ENCODE measurements at regions of chr15 and their contacts with region 1.

Region 1: GRCh38 chr15:79184465-79184892 is 93.9 kb upstream of the RASGRF1 start:
- DNase-seq: peak in 5 of 6 donors; percentile 27 to 84 (median 68)
- ATAC-seq: peak; percentile 46 to 85 (median 80)
- H3K4me3 ChIP-seq: no peak overlapping the region
- H3K27ac ChIP-seq: no peak overlapping the region
- H3K4me1 ChIP-seq: no peaks in the 10 kb centered on the region
- H3K27me3 ChIP-seq: no peaks in the 10 kb centered on the region
- CTCF ChIP-seq: peak; percentile 78 to 96 (median 92)

Region 2: GRCh38 chr15:78909791-78910228 is 274.7 kb before region 1 on chr15:
- intact Hi-C with region 1: loop called in 1 of 3 experiments (anchors 10 kb)
- DNase-seq: no peak
- ATAC-seq: peak in 3 of 4 donors; percentile 53 to 79 (median 54)
- H3K4me3 ChIP-seq: no peak overlapping the region
- H3K27ac ChIP-seq: no peak overlapping the region
- H3K4me1 ChIP-seq: peaks cover 3 to 7% (median 5%) of the 10 kb centered on the region in 3 donors
- H3K27me3 ChIP-seq: no peaks in the 10 kb centered on the region
- CTCF ChIP-seq: peak in 3 of 4 donors; percentile 39 to 66 (median 40)

Region 3: DNA sequence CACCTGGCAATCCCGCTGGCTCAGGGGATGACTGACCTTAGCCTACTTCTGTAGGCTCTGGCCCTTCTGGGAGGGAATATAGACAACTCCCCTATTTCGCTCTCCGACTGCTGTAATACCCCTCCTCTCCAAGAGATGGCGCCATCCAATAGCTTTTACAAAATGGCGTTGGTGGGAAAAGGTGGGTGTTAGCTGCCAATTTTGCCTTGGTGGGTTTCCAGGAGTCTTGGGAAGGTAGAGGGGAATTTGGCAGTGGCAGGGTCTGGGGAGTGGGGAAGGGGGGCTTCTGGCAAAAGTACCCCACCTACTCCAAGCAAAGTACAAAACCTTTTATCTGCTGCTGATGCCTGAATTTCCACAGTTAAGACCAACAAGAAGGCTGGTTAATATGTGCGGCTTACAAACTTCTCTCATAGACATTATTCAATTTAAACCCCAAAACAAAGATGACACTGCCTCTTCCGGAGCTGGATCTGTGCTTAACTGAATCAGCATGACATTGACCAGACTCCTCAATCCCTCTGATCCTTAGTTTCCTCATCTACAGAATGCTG is 156.0 kb before region 1 on chr15:
- intact Hi-C with region 1: loop called (anchors 5 to 10 kb)
- DNase-seq: peak in 1 of 6 donors; percentile 35
- ATAC-seq: peak in 3 of 4 donors; percentile 44 to 63 (median 63)
- H3K4me3 ChIP-seq: no peak overlapping the region
- H3K27ac ChIP-seq: no peak overlapping the region
- H3K4me1 ChIP-seq: no peaks in the 10 kb centered on the region
- H3K27me3 ChIP-seq: no peaks in the 10 kb centered on the region
- CTCF ChIP-seq: peak; percentile 25 to 49 (median 38)

Region 4: DNA sequence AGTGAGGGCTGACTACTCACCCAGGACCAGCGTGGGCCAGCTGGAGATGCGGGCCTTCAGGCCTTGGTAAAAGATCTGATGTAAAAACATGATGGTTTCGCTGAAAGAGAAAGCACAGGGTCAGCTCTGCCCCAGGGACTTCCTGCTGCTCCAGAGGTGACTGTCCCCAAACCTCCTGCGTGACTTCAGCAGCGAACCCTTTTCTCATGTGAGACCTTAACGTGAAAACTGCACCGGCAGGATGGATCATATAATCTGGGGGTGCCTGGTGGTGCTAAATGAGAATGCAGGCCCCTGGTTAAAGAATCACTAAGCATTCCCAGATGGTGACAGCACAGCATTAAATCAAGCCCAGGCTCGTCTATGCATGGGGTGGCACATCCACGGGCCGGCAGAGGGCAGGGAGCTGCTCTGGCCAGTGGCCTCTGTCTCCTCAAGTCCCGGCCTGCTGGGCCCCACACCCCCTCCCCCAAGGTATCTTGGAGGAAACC is 149.3 kb before region 1 on chr15:
- intact Hi-C with region 1: loop called in 1 of 3 experiments (anchors 10 kb)
- DNase-seq: no peak
- ATAC-seq: no peak
- H3K4me3 ChIP-seq: no peak overlapping the region
- H3K27ac ChIP-seq: no peak overlapping the region
- H3K4me1 ChIP-seq: no peaks in the 10 kb centered on the region
- H3K27me3 ChIP-seq: no peaks in the 10 kb centered on the region
- CTCF ChIP-seq: no peak

Region 5: DNA sequence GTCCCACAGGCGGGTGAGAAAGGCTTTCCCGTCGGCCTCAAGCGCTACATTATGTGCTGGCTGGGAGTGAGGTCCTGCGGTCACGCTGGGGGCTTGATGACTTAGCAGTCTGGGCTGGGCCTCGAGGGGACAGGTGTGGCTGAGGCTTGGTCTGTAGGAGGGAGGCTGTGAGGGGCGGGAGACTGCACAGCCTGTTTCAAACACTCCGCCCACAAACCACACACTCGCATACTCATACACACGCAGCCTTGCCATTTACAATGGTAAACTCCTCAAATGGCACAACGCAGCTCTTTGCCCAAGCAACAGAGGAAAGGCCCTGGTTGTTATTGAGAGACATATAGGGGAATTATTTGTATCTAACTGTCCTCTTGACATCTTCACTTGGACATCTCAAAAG is 61.5 kb before region 1 on chr15:
- intact Hi-C with region 1: no loop called
- DNase-seq: no peak
- ATAC-seq: no peak
- H3K4me3 ChIP-seq: no peak overlapping the region
- H3K27ac ChIP-seq: no peak overlapping the region
- H3K4me1 ChIP-seq: no peaks in the 10 kb centered on the region
- H3K27me3 ChIP-seq: no peaks in the 10 kb centered on the region
- CTCF ChIP-seq: no peak

Measured in pancreas (tissue), 10 donors.